Lower leg skin (tissue), 4 donors: ENCODE measurements at regions of chr22 and their contacts with region 1.

Region 1: DNA sequence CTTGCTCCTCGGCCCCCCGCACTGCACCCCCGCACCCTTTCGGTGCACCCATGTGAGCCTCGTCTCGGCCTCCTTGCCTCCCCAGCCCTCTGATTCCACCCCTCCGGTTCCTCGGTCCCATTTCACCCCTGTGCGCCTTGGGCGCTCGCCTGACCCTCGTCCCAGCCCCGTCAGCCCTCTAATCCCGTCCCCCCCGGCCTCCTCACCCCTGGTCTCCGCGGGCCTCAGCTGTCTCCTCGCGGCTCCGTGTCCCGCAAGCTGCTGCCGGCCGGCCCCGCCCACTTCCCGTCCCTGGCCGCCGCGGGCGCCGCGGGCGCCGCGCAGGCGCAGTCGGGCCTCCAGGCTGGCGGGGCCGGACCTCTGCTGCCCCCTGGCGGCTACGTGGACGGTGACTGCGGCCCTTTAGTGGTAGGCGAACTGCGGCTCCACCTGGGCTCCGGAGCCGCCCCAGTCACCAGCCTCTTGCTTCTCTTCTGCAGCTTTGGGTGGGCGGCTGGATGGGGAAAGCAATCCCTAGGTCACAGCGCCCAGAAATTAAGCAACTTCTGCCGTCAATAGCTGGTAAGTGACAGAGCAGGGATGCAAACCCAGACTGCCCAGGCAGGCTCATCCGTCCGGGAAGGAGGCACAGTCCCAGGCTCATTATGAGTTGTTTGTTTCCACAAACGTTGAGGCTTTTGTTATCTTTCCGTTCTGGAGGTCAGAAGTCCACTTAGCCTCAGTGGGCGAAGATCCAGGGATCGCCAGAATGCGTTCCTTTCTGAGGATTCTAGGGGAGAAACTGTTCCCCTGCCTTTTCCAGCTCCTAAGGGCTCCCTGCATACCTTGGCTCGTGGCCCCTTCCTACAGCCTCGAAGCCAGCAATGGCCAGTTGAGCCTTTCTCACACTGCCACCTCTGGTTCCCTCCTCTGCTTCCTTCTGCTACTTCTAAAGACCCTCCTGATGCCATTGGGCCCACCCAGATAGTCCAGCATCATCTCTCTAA is at the start of gene PPM1F:
- DNase-seq: peak; percentile 80 to 97
- H3K4me3 ChIP-seq: peak within 1 kb of the TSS; percentile 67
- CTCF ChIP-seq: no peak
- POLR2A ChIP-seq: no peak
- total RNA-seq, gene PPM1F: 18.3 to 29.5 (median 25.8) TPM

Region 2: DNA sequence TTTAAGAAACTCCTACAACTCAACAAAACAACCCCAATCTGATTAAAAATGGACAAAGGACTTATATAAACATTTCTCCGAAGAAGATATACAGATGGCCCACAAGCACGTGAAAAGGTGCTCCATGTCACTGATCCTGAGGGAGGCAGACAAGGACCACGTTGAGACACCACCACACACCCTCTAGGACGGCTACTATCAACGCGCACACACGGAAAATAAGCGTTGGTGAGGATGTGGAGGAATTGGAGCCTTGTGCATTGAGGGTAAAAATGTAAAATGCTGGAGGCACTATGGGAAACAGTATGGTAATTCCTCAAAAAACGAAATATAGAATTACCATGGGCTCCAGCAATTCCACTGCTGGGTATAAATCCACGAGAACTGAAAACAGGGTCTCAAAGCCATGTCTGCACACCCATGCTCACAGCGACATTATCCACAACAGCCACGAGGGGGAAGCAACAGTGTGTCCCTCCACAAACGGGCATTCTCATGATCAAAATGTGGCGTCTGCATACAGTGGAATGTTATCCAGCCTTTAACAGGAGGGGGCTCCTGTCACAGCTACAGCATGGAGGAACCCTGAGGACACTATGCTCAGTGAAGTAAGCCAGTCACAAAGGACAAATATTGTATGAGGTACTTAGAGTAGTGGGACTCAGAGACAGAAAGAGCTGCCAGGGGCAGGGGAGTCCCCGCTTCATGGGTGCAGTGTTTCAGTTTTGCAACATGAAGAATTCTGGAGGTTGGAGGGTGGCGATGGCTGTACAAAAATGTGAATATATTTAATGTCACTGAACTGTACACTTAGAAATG is 239.8 kb before region 1 on chr22:
- intact Hi-C with region 1: loop called (anchors 5 kb)
- DNase-seq: peak; percentile 58 to 94
- H3K4me3 ChIP-seq: no peak overlapping the region
- CTCF ChIP-seq: peak in 1 of 3 donors; percentile 20
- POLR2A ChIP-seq: no peak